Heart right ventricle (tissue), 16 donors: ENCODE measurements at regions of chr17 and their contacts with region 1.

Region 1: DNA sequence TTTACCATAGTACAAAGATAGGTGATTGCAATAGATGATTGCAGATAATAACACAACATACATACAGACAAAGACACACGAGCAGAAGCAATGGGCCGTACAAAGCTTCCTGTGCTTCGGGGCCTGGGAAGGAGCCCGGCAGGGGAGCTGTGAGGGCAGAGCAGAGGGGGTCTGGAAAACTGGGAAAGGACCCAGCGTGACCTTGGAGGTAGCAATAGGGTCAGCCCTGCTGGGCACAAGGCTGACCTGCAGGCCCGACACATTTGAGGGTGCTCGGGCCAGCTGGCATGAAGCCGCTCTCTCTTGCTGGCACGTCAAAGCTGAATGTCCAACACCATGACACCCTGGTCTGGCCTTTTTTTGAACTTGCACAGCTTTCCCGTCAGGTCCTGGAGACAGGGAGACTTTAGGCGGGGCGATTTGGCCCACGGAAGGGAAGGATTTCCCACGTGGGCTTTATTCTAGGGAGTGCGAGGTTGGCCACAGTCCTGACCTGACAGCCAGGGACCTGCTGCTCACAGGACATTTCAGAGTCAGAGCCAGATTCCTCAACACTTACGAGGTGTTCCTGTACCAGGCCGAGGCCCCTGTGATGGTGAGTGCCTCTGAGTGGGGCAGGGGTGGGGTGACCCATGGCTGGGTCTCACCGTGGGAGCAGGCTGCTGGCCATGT is 83.2 kb downstream of the NTN1 start:
- DNase-seq: peak; percentile 74 to 82
- ATAC-seq: peak; percentile 90 to 97 (median 94)
- H3K4me3 ChIP-seq: no peak overlapping the region
- H3K27ac ChIP-seq: peak overlapping the region in 9 of 10 donors; percentile 20 to 78 (median 69)
- H3K4me1 ChIP-seq: peaks cover 0 to 14% (median 0%) of the 10 kb centered on the region in 9 donors
- H3K27me3 ChIP-seq: peaks cover 0 to 2% (median 0%) of the 10 kb centered on the region in 7 donors
- CTCF ChIP-seq: peak in 2 of 9 donors; percentile 16 to 22

Region 2: GRCh38 chr17:9021158-9021991 is 83.1 kb before region 1 on chr17 and contains the start of gene NTN1:
- intact Hi-C with region 1: loop called in 2 of 10 experiments (anchors 10 kb)
- DNase-seq: peak; percentile 43 to 57
- ATAC-seq: peak; percentile 76 to 87 (median 82)
- H3K4me3 ChIP-seq: peak within 1 kb of the TSS; percentile 53 to 82 (median 70)
- H3K27ac ChIP-seq: peak within 1 kb of the TSS; percentile 29 to 81 (median 72)
- H3K4me1 ChIP-seq: peaks cover 2 to 42% (median 36%) of the 10 kb centered on the region in 9 donors
- H3K27me3 ChIP-seq: peaks cover 0 to 100% (median 44%) of the 10 kb centered on the region in 7 donors
- CTCF ChIP-seq: no peak
- total RNA-seq, gene NTN1: 6.2 to 38.7 (median 17.9) TPM

Region 3: DNA sequence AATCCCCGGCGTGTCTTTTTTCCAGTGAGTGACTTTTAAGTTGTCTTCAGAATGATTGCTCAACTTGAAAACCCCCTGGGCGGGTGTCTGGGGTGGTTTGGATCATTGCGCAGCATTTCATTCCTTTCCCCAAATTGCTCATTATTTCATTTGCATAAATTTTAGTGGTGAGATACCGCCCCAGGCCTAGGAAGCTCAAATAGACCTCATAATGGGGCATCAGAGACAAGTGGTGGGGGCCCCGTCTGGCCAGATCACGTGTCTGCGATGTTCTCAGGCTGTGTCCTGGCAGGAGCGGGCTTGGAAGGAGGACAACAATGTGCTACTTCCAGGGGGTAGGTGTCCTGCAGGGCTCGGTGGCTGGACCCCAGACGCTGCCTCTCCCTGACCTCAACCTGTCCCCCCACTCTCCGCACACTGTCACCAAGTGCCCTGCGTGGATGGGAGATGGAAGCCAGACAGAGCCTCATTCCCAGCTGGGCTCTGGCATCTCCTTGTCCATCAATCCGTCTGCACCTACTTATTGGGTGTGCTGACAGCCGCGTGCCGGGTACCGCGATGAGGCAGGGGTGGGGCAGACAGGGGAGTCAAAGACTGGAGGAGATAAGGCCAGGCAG is 33.7 kb after region 1 on chr17:
- intact Hi-C with region 1: loop called in 2 of 10 experiments (anchors 1 to 5 kb)
- DNase-seq: peak; percentile 62 to 75
- ATAC-seq: peak; percentile 85 to 94 (median 90)
- H3K4me3 ChIP-seq: no peak overlapping the region
- H3K27ac ChIP-seq: no peak overlapping the region
- H3K4me1 ChIP-seq: peaks cover 0 to 11% (median 0%) of the 10 kb centered on the region in 9 donors
- H3K27me3 ChIP-seq: no peaks in the 10 kb centered on the region
- CTCF ChIP-seq: no peak

Region 4: GRCh38 chr17:9144502-9145249 is 40.2 kb after region 1 on chr17:
- intact Hi-C with region 1: loop called in 1 of 10 experiments (anchors 5 kb)
- DNase-seq: no peak
- ATAC-seq: no peak
- H3K4me3 ChIP-seq: no peak overlapping the region
- H3K27ac ChIP-seq: no peak overlapping the region
- H3K4me1 ChIP-seq: peaks cover 0 to 5% (median 0%) of the 10 kb centered on the region in 9 donors
- H3K27me3 ChIP-seq: peaks cover 0 to 12% (median 0%) of the 10 kb centered on the region in 7 donors
- CTCF ChIP-seq: no peak

Region 5: GRCh38 chr17:9162275-9162985 is 57.9 kb after region 1 on chr17:
- intact Hi-C with region 1: loop called in 1 of 10 experiments (anchors 10 kb)
- DNase-seq: no peak
- ATAC-seq: peak in 1 of 8 donors; percentile 49
- H3K4me3 ChIP-seq: no peak overlapping the region
- H3K27ac ChIP-seq: no peak overlapping the region
- H3K4me1 ChIP-seq: no peaks in the 10 kb centered on the region
- H3K27me3 ChIP-seq: no peaks in the 10 kb centered on the region
- CTCF ChIP-seq: no peak